ENCODE measurements at regions of chr9 and their contacts with region 1.

Region 1: DNA sequence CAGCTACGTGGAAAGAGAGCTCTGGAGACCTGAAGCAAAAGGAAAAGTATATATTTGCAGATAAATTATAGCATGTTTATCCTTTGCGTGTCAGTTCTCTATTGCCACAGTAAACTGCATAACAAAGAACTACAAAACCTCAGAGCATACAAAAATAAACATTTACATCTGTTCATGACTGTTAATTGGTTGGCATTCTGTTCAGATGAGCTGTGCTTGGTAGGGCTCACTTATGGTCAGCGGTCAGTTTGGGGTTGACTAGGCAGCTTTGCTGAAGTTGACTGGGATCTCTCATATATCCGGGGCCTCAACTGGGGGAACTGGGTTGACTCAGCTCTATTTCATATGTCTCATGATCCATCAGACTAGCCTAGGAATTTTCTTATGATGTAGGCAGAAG is 257.7 kb downstream of the TLE1 start:
- DNase-seq: peak; percentile 99
- ATAC-seq: peak; percentile 99
- H3K4me3 ChIP-seq: no peak overlapping the region
- H3K27ac ChIP-seq: peak overlapping the region; percentile 69; the same call in 1 of the 2 replicates
- H3K4me1 ChIP-seq: peaks cover 2% of the 10 kb centered on the region; the same call in 1 of the 2 replicates
- H3K27me3 ChIP-seq: no peaks in the 10 kb centered on the region
- CTCF ChIP-seq: no peak
- POLR2A ChIP-seq: no peak
- RAD21 ChIP-seq: no peak; the same call in none of the 2 replicates

Region 2: GRCh38 chr9:81374459-81375186 is 57.0 kb before region 1 on chr9:
- CTCF ChIA-PET with region 1: no interaction called
- POLR2A ChIA-PET with region 1: no interaction called
- dilution Hi-C with region 1: no loop called
- in situ Hi-C with region 1: no loop called
- intact Hi-C with region 1: no loop called
- DNase-seq: peak; percentile 40
- ATAC-seq: no peak; the same call in 1 of the 2 replicates
- H3K4me3 ChIP-seq: no peak overlapping the region
- H3K27ac ChIP-seq: no peak overlapping the region
- H3K4me1 ChIP-seq: no peaks in the 10 kb centered on the region
- H3K27me3 ChIP-seq: no peaks in the 10 kb centered on the region
- CTCF ChIP-seq: no peak
- POLR2A ChIP-seq: no peak
- RAD21 ChIP-seq: no peak

Region 3: DNA sequence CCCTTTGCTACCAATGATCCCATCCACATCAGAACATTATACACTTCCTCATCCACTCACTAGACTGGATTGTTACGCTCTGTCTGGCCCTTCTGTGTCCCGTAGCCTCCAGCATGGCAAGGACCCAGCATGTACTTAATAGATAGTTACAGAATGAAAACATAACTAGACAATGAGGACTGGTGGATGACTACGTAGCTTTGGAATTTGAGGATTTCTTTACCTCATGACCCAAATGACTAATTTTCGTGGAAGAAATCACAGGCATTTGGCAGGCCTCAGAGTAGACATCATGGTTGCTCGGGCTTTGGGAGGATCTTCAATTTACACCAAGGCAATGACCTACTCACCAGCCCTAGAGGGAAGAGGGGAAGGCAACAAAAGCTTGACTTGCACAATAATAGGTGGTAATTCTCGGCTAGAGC is 42.1 kb before region 1 on chr9:
- CTCF ChIA-PET with region 1: no interaction called
- POLR2A ChIA-PET with region 1: interaction called, 3 read pairs
- dilution Hi-C with region 1: no loop called
- in situ Hi-C with region 1: no loop called
- intact Hi-C with region 1: loop called (anchors 2 kb)
- DNase-seq: peak; percentile 99
- ATAC-seq: peak; percentile 92
- H3K4me3 ChIP-seq: no peak overlapping the region
- H3K27ac ChIP-seq: peak overlapping the region; percentile 44
- H3K4me1 ChIP-seq: peaks cover 17% of the 10 kb centered on the region
- H3K27me3 ChIP-seq: no peaks in the 10 kb centered on the region
- CTCF ChIP-seq: no peak
- POLR2A ChIP-seq: no peak
- RAD21 ChIP-seq: no peak; the same call in 1 of the 2 replicates

Region 4: DNA sequence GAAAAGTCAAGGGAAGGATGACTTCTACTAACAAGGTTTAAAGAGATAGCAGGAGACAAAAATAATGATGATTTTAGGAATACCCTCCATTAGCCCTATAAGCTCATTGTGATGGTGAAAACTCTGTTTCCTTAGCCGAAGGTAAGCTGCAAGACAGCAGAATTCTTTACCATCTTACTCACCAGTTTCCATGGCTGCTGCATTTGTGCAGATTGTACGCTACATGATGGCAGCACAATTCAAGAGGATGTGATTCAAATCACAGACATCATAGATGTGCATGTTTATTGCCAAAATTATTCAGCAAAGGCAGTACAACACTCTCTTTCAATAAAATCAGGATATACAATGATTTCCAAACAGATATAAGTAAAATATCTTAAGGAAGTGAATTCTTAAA is 732.5 kb after region 1 on chr9:
- CTCF ChIA-PET with region 1: no interaction called
- POLR2A ChIA-PET with region 1: no interaction called
- dilution Hi-C with region 1: no loop called
- in situ Hi-C with region 1: no loop called
- intact Hi-C with region 1: no loop called
- DNase-seq: peak; percentile 36
- ATAC-seq: no peak
- H3K4me3 ChIP-seq: no peak overlapping the region
- H3K27ac ChIP-seq: no peak overlapping the region
- H3K4me1 ChIP-seq: no peaks in the 10 kb centered on the region
- H3K27me3 ChIP-seq: no peaks in the 10 kb centered on the region
- CTCF ChIP-seq: no peak
- POLR2A ChIP-seq: no peak
- RAD21 ChIP-seq: no peak

Measured in IMR-90 (cell line).